ENCODE measurements at regions of chr7 and their contacts with region 1.

Region 1: GRCh38 chr7:150898475-150899011 is 46.2 kb downstream of the AOC1 start:
- DNase-seq: peak; percentile 77 to 87
- ATAC-seq: peak; percentile 78 to 94 (median 84)
- H3K4me3 ChIP-seq: no peak overlapping the region
- H3K4me3 Mint-ChIP-seq: no peak overlapping the region
- H3K27ac ChIP-seq: no peak overlapping the region
- H3K27ac Mint-ChIP-seq: no peak overlapping the region
- H3K4me1 ChIP-seq: peaks cover 11% of the 10 kb centered on the region
- H3K4me1 Mint-ChIP-seq: peaks cover 0 to 8% of the 10 kb centered on the region in 2 donors
- H3K27me3 ChIP-seq: peaks cover 10% of the 10 kb centered on the region
- H3K27me3 Mint-ChIP-seq: peaks cover 63 to 84% of the 10 kb centered on the region in 2 donors
- CTCF ChIP-seq: peak; percentile 95

Region 2: GRCh38 chr7:150909200-150909995 is 10.9 kb after region 1 on chr7:
- intact Hi-C with region 1: no loop called
- DNase-seq: peak in 1 of 2 donors; percentile 74
- ATAC-seq: peak; percentile 78 to 97 (median 88)
- H3K4me3 ChIP-seq: no peak overlapping the region
- H3K4me3 Mint-ChIP-seq: peak overlapping the region; percentile 69
- H3K27ac ChIP-seq: no peak overlapping the region
- H3K27ac Mint-ChIP-seq: peak overlapping the region; percentile 69 to 75
- H3K4me1 ChIP-seq: peaks cover 17% of the 10 kb centered on the region
- H3K4me1 Mint-ChIP-seq: peaks cover 10 to 11% of the 10 kb centered on the region in 2 donors
- H3K27me3 ChIP-seq: peaks cover 14% of the 10 kb centered on the region
- H3K27me3 Mint-ChIP-seq: peaks cover 35 to 39% of the 10 kb centered on the region in 2 donors
- CTCF ChIP-seq: no peak

Region 3: GRCh38 chr7:150988230-150989226 is 90.0 kb after region 1 on chr7:
- intact Hi-C with region 1: loop called (anchors 1 kb)
- DNase-seq: peak; percentile 52 to 84
- ATAC-seq: peak; percentile 64 to 77 (median 76)
- H3K4me3 ChIP-seq: no peak overlapping the region
- H3K4me3 Mint-ChIP-seq: peak overlapping the region; percentile 21
- H3K27ac ChIP-seq: no peak overlapping the region
- H3K27ac Mint-ChIP-seq: no peak overlapping the region
- H3K4me1 ChIP-seq: peaks cover 14% of the 10 kb centered on the region
- H3K4me1 Mint-ChIP-seq: peaks cover 16 to 19% of the 10 kb centered on the region in 2 donors
- H3K27me3 ChIP-seq: peaks cover 16% of the 10 kb centered on the region
- H3K27me3 Mint-ChIP-seq: peaks cover 30 to 32% of the 10 kb centered on the region in 2 donors
- CTCF ChIP-seq: peak; percentile 85

Region 4: DNA sequence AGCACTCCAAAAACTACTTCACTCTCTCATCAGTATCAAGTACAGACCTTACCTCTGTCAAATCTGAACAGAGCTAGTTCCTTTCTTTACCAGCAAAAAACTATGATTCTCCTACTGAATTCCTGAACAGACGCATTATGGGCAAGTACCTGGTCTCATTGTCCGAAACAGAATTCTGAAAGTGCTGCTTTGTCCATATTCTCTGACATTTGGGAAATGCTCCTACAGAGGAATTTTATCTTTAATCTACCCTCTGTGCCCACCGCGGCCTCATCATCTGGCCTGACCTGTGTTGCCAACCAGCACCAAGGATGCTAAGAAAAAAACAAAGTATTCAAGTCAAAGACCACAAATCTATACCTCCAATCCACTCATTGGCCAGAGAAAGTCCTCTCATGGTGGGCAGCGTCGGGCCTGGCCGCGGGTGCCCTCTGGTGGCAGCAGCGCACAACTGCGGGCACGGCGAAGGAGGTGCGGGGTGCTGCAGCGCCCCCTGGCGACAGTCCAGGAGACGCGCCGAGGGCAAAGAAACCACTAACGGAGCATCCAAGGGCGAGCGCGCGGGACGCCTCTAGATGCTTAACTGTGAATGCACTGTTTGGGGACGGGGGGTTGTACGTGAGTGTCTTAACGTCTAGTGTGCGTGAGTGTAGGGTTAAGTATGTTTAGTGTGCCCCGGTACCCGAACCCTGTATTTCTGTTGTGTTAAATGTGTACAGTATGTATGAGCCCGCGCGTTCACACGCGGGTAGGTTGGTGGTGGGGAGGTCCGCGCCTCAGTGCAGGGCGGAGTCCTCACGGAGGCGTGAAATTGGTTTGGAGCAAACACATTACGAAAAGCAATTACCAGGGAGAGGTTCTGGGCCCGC is 274.0 kb after region 1 on chr7:
- intact Hi-C with region 1: loop called (anchors 2 kb)
- DNase-seq: peak; percentile 81 to 91
- ATAC-seq: peak; percentile 91 to 96 (median 91)
- H3K4me3 ChIP-seq: no peak overlapping the region
- H3K4me3 Mint-ChIP-seq: no peak overlapping the region
- H3K27ac ChIP-seq: no peak overlapping the region
- H3K27ac Mint-ChIP-seq: no peak overlapping the region
- H3K4me1 ChIP-seq: peaks cover 12% of the 10 kb centered on the region
- H3K4me1 Mint-ChIP-seq: peaks cover 10 to 20% of the 10 kb centered on the region in 2 donors
- H3K27me3 ChIP-seq: peaks cover 9% of the 10 kb centered on the region
- H3K27me3 Mint-ChIP-seq: peaks cover 41 to 48% of the 10 kb centered on the region in 2 donors
- CTCF ChIP-seq: peak; percentile 100